ENCODE measurements at regions of chr1 and their contacts with region 1.

Region 1: DNA sequence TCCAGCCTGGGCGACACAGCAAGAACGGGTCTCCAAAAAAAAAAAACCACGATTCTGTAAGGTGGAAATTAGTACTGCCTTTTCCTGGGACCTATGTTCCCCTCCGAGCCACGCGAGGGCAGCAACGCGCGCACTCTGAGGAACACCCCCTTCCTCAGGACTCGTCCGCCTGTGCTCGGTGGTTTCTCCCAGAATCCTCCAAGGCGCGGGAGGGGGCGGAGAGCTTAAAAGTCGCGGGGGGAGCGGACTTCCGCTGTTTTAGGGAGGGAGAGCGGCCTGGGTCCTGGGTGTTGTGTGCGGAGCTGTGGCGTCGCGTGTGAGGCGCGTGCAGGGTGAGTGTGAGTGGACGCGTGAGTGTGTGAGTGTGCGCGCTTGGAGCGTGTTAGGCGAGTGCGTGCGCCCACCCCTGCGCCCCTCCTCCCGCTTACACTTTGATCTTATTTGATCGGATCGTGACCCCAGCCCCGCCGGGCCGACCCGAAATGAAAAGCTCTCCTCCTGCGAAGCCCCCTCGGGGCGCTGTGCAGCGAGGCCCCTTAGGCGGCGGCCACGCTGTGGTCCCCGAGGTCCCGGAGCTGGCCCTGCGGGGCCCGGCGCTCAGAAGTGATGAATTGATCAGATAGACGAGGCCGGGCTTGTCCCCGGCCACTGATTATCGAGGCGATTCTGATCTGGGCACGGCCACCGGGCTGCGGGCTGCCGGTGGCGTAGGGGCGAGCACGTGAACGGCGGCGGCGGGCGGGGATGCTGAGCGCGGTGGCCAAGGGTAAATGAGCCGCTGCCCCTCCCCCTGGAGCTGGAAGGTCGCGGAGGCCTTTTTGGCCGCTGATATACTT is 9.6 kb downstream of the TMEM167B start:
- DNase-seq: peak; percentile 96 to 98 (median 97)
- H3K4me3 ChIP-seq: peak overlapping the region; percentile 79
- H3K27ac ChIP-seq: peak overlapping the region; percentile 93
- H3K4me1 ChIP-seq: no peaks in the 10 kb centered on the region
- H3K27me3 ChIP-seq: no peaks in the 10 kb centered on the region
- CTCF ChIP-seq: peak; percentile 85 to 94 (median 89)
- EP300 ChIP-seq: no peak
- POLR2A ChIP-seq: peak; percentile 99

Region 2: GRCh38 chr1:108955881-108956280 is 144.3 kb before region 1 on chr1:
- intact Hi-C with region 1: loop called in 1 of 4 experiments (anchors 10 kb)
- DNase-seq: no peak
- H3K4me3 ChIP-seq: no peak overlapping the region
- H3K27ac ChIP-seq: no peak overlapping the region
- H3K4me1 ChIP-seq: no peaks in the 10 kb centered on the region
- H3K27me3 ChIP-seq: no peaks in the 10 kb centered on the region
- CTCF ChIP-seq: no peak
- EP300 ChIP-seq: no peak
- POLR2A ChIP-seq: no peak

Region 3: DNA sequence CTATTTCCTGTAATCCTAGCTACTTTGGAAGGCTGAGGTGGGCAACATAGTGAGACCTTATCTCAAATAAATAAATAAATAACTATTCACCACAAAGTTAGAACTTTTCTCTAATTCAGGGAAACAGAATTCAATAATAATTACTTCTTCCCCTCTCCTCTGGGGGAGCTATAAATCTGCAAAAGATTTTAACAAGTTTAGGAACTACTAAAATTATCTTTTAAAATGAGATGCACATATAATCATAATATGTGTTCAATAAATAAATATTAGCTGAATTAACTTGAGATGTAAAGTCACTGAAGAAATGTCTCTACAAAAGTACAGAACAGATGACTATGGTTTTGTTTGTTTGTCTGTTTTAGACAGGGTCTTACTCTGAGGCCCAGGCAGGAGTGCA is 72.3 kb before region 1 on chr1:
- intact Hi-C with region 1: no loop called
- DNase-seq: no peak
- H3K4me3 ChIP-seq: no peak overlapping the region
- H3K27ac ChIP-seq: no peak overlapping the region
- H3K4me1 ChIP-seq: no peaks in the 10 kb centered on the region
- H3K27me3 ChIP-seq: no peaks in the 10 kb centered on the region
- CTCF ChIP-seq: no peak
- EP300 ChIP-seq: no peak
- POLR2A ChIP-seq: no peak

Region 4: GRCh38 chr1:109181105-109181806 is 81.1 kb after region 1 on chr1:
- intact Hi-C with region 1: no loop called
- DNase-seq: no peak
- H3K4me3 ChIP-seq: no peak overlapping the region
- H3K27ac ChIP-seq: no peak overlapping the region
- H3K4me1 ChIP-seq: no peaks in the 10 kb centered on the region
- H3K27me3 ChIP-seq: no peaks in the 10 kb centered on the region
- CTCF ChIP-seq: no peak
- EP300 ChIP-seq: no peak
- POLR2A ChIP-seq: no peak

Measured in ovary (tissue), 10 donors.